AG04449 (cell line): ENCODE measurements at regions of chr3 and their contacts with region 1.

Region 1: GRCh38 chr3:125154800-125155269 is 57.7 kb downstream of the SLC12A8 start:
- DNase-seq: no peak
- H3K4me3 ChIP-seq: no peak overlapping the region
- CTCF ChIP-seq: no peak

Region 2: GRCh38 chr3:124439603-124440002 is 715.2 kb before region 1 on chr3:
- CTCF ChIA-PET with region 1: no interaction called
- POLR2A ChIA-PET with region 1: no interaction called
- DNase-seq: no peak
- H3K4me3 ChIP-seq: no peak overlapping the region
- CTCF ChIP-seq: no peak

Region 3: DNA sequence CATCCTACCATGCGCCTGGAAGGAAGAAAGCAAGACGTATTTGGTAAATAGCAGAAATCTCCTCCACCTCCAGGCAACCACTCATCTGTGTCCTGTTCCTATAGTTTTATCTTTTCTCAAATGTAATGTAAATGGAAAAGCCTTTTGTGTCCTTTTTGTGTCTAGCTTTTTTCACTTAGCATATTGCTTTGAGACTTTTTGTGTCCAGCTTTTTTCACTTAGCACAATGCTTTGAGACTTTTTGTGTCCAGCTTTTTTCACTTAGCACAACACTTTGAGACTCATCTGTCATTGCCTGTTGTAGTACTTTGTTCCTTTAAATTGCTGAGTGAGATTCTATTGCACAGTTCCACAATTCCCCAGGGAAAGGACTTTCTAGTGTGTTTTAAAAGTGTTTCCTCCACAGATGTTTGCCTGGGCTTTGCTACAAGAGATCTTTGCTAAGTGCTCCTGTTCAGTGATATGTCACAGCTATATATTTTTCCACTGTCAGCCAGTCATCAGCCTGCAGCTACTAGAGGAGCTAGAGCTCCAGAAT is 192.4 kb before region 1 on chr3:
- CTCF ChIA-PET with region 1: no interaction called
- POLR2A ChIA-PET with region 1: no interaction called
- DNase-seq: no peak
- H3K4me3 ChIP-seq: no peak overlapping the region
- CTCF ChIP-seq: no peak

Region 4: GRCh38 chr3:125165189-125165947 is 10.5 kb after region 1 on chr3:
- CTCF ChIA-PET with region 1: interaction called, 12 read pairs
- POLR2A ChIA-PET with region 1: no interaction called
- DNase-seq: no peak
- H3K4me3 ChIP-seq: no peak overlapping the region
- CTCF ChIP-seq: peak; percentile 72

Region 5: DNA sequence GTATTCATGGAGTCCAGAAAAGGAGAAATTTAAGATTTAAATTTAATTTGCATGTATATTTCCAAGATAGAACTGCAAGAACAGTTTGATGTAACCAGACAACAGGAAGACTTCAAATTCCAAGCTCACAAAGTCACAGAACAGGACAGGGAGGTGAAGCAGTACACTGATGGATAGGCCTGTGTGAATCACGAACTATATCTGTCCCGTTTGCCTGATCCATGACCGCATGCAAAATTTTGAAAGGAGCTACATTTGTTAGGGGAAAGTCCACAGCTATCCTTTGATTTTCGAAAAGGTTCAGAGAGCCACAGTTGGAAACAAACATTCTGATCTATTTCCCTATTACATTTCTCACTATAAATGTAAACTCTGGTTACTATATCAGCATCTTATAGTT is 137.2 kb after region 1 on chr3:
- CTCF ChIA-PET with region 1: no interaction called
- POLR2A ChIA-PET with region 1: no interaction called
- DNase-seq: no peak
- H3K4me3 ChIP-seq: no peak overlapping the region
- CTCF ChIP-seq: no peak

Region 6: GRCh38 chr3:125428216-125428830 is 273.5 kb after region 1 on chr3:
- CTCF ChIA-PET with region 1: no interaction called
- POLR2A ChIA-PET with region 1: no interaction called
- DNase-seq: no peak
- H3K4me3 ChIP-seq: no peak overlapping the region
- CTCF ChIP-seq: no peak